WTC11 (cell line): ENCODE measurements at regions of chr7 and their contacts with region 1.

Region 1: DNA sequence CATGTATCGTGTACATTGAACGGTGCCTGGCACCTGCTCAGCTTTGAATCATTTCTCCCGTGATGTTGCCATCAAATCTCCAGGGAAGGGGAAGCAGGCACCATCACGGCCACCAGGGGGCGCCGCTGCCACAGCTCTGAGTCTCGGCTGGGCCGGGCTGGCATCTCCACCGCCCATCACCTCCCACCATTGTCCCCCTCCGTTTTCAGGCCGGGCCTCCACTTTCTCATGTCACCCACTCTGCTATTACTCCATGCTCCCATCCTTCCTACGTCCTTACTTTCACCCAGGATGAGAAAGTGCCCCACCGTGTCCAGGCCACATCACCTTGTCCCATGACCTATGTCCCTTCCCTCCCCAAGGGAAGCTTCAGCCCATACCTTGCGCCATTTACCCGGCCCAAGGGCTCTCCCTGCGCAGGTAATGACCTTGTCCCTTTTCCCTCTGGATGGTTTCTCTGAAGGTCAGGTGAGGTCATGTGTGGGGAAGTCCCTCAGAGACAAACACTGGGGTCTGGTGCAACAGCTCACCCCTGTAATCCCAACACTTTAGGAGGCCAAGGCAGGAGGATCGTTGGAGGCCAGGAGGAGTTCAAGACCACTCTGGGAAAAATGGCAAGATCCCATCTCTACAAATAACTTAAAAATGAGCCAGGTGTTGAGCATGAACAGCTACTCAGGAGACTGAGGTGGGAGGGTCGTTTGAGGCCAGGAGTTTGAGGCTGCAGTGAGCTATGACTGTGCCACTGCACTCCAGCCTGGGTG is 31.8 kb upstream of the OCM2 start:
- DNase-seq: peak; percentile 90
- ATAC-seq: peak; percentile 93
- H3K4me3 Mint-ChIP-seq: no peak overlapping the region
- H3K27ac Mint-ChIP-seq: no peak overlapping the region
- H3K4me1 Mint-ChIP-seq: no peaks in the 10 kb centered on the region
- H3K27me3 Mint-ChIP-seq: no peaks in the 10 kb centered on the region
- CTCF ChIP-seq: peak; percentile 97

Region 2: DNA sequence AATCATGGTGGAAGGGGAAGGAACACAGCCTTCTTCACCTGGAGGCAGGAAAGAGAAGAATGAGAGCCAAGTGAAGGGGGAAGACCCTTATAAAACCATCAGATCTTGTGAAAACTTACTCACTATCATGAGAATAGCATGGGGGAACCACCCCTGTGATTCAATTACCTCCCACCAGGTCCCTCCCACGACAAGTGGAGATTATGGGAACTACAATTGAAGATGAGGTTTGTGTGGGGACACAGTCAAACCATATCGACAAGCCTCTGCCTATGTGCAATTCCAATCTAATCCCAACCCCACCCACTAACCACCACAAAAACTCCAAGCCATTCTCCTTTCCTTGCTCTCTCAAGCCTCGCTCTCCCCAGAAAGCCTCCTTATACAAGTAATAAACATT is 220.7 kb before region 1 on chr7:
- CTCF ChIA-PET with region 1: no interaction called
- POLR2A ChIA-PET with region 1: no interaction called
- DNase-seq: no peak
- ATAC-seq: no peak
- H3K4me3 Mint-ChIP-seq: no peak overlapping the region
- H3K27ac Mint-ChIP-seq: no peak overlapping the region
- H3K4me1 Mint-ChIP-seq: peaks cover 6% of the 10 kb centered on the region; the same call in 1 of the 2 replicates
- H3K27me3 Mint-ChIP-seq: 0 out of 2 replicates have a peak, but pooled peaks cover 2% of the 10 kb centered on the region
- CTCF ChIP-seq: no peak

Region 3: GRCh38 chr7:97959046-97959445 is 62.7 kb before region 1 on chr7:
- CTCF ChIA-PET with region 1: no interaction called
- POLR2A ChIA-PET with region 1: no interaction called
- DNase-seq: no peak
- ATAC-seq: no peak
- H3K4me3 Mint-ChIP-seq: no peak overlapping the region
- H3K27ac Mint-ChIP-seq: no peak overlapping the region
- H3K4me1 Mint-ChIP-seq: no peaks in the 10 kb centered on the region
- H3K27me3 Mint-ChIP-seq: no peaks in the 10 kb centered on the region
- CTCF ChIP-seq: no peak

Region 4: GRCh38 chr7:98075801-98076200 is 54.0 kb after region 1 on chr7:
- CTCF ChIA-PET with region 1: interaction called, 12 read pairs
- POLR2A ChIA-PET with region 1: no interaction called
- DNase-seq: no peak
- ATAC-seq: no peak
- H3K4me3 Mint-ChIP-seq: no peak overlapping the region
- H3K27ac Mint-ChIP-seq: no peak overlapping the region
- H3K4me1 Mint-ChIP-seq: peaks cover 7% of the 10 kb centered on the region; the same call in 1 of the 2 replicates
- H3K27me3 Mint-ChIP-seq: no peaks in the 10 kb centered on the region; the same call in 1 of the 2 replicates
- CTCF ChIP-seq: no peak

Region 5: GRCh38 chr7:98106647-98107445 is 85.1 kb after region 1 on chr7 and contains the start of gene LMTK2:
- CTCF ChIA-PET with region 1: interaction called, 21 read pairs
- POLR2A ChIA-PET with region 1: interaction called, 3 read pairs
- DNase-seq: peak; percentile 96
- ATAC-seq: peak; percentile 98
- H3K4me3 Mint-ChIP-seq: peak within 1 kb of the TSS; percentile 98
- H3K27ac Mint-ChIP-seq: peak within 1 kb of the TSS; percentile 97
- H3K4me1 Mint-ChIP-seq: peaks cover 39% of the 10 kb centered on the region
- H3K27me3 Mint-ChIP-seq: no peaks in the 10 kb centered on the region
- CTCF ChIP-seq: peak; percentile 80
- total RNA-seq, gene LMTK2: 23.0 to 25.5 TPM (median 24.3 TPM) in 3 replicates

Region 6: GRCh38 chr7:98168181-98168905 is 146.6 kb after region 1 on chr7:
- CTCF ChIA-PET with region 1: interaction called, 256 read pairs
- POLR2A ChIA-PET with region 1: no interaction called
- DNase-seq: peak; percentile 72
- ATAC-seq: peak; percentile 76
- H3K4me3 Mint-ChIP-seq: no peak overlapping the region
- H3K27ac Mint-ChIP-seq: peak overlapping the region; percentile 70; the same call in 1 of the 2 replicates
- H3K4me1 Mint-ChIP-seq: peaks cover 26% of the 10 kb centered on the region
- H3K27me3 Mint-ChIP-seq: no peaks in the 10 kb centered on the region
- CTCF ChIP-seq: peak; percentile 67

Region 7: GRCh38 chr7:98178347-98178746 is 156.6 kb after region 1 on chr7:
- CTCF ChIA-PET with region 1: interaction called, 19 read pairs
- POLR2A ChIA-PET with region 1: no interaction called
- DNase-seq: no peak
- ATAC-seq: peak; percentile 50
- H3K4me3 Mint-ChIP-seq: no peak overlapping the region
- H3K27ac Mint-ChIP-seq: 0 out of 2 replicates have a peak overlapping the region, but pooled peaks have one; percentile 15
- H3K4me1 Mint-ChIP-seq: peaks cover 29% of the 10 kb centered on the region
- H3K27me3 Mint-ChIP-seq: no peaks in the 10 kb centered on the region
- CTCF ChIP-seq: no peak

Region 8: DNA sequence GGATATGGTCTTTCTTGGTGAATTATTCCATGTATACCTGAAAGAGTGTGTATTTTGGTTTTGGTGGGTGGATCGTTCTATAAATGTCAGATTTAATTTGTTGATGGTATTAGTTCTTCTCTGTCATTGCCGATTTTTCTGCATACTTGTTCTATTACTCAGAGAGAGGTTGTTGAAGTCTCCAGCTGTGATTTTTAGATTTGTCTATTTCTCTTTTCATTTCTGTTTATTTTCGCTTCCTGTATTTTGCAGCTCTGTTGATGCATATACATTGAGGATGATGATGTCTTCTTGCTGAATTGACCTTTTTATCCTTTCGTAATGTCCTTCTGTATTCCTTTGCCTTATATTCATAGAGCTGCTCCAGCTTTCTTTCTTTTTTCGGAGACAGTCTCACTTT is 177.4 kb after region 1 on chr7:
- CTCF ChIA-PET with region 1: interaction called, 12 read pairs
- POLR2A ChIA-PET with region 1: no interaction called
- DNase-seq: no peak
- ATAC-seq: no peak
- H3K4me3 Mint-ChIP-seq: no peak overlapping the region
- H3K27ac Mint-ChIP-seq: no peak overlapping the region
- H3K4me1 Mint-ChIP-seq: no peaks in the 10 kb centered on the region
- H3K27me3 Mint-ChIP-seq: no peaks in the 10 kb centered on the region
- CTCF ChIP-seq: no peak

Region 9: GRCh38 chr7:98280791-98281756 is 259.3 kb after region 1 on chr7 and contains the start of gene BRI3:
- CTCF ChIA-PET with region 1: no interaction called
- POLR2A ChIA-PET with region 1: no interaction called
- DNase-seq: peak; percentile 85
- ATAC-seq: peak; percentile 87
- H3K4me3 Mint-ChIP-seq: peak within 1 kb of the TSS; percentile 90
- H3K27ac Mint-ChIP-seq: peak within 1 kb of the TSS; percentile 82
- H3K4me1 Mint-ChIP-seq: peaks cover 30% of the 10 kb centered on the region
- H3K27me3 Mint-ChIP-seq: no peaks in the 10 kb centered on the region; the same call in 1 of the 2 replicates
- CTCF ChIP-seq: peak; percentile 61
- total RNA-seq, gene BRI3: 108 to 112 TPM (median 110 TPM) in 3 replicates